ENCODE measurements at regions of chr22 and their contacts with region 1.

Region 1: DNA sequence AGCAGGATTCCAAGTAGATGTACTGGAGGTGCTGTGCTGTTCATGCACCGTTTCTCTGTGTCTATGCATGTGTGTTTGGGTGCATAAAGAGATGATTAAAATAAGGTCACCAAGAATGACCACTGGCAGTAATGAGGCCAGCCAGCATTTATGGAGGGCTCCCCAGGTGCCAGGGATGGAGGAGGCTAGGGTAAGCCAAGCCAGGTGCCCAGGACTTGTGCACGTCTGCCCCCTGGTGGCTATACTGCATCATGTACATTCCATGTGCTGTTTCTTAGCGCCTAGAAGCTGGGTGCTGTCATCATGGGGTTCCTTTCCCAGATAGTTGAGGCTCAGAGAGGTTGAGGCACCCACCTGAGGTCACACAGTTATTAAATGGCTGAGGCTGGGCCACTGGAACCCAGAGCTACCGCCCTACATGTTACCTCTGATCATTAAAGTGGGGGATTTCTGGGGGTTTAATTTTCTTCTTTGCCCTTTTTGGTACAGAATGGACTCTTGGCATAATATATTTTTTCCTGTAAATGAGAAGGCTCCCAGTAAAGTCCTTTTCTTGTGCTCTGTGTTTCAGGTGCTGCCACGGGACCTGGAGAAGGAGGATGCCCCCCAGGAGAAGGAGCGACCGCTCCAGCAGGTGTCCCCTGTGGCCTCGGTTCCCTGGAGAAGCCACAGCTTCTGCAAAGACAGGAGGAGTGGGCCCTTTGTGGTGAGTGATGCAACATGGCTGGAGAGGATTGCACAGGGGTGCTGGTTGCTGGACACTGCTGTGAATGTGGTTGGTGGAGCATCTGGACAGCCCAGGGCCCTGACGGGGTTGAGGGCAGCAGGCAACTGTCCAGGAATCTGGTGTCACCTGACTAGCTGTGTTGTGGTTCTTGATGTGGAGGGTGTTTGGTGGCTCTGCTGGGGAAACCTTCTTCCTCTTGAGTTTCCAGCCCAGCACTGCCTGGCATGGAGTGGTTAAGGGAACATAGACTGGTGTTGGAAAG is 96.4 kb downstream of the KIAA1671 start:
- DNase-seq: peak; percentile 73 to 82 (median 78)
- ATAC-seq: peak; percentile 77 to 81
- H3K4me3 ChIP-seq: no peak overlapping the region
- H3K27ac ChIP-seq: no peak overlapping the region
- H3K4me1 ChIP-seq: no peaks in the 10 kb centered on the region
- H3K27me3 ChIP-seq: no peaks in the 10 kb centered on the region

Region 2: GRCh38 chr22:24938741-24939341 is 110.1 kb before region 1 on chr22:
- intact Hi-C with region 1: loop called in 1 of 4 experiments (anchors 5 kb)
- DNase-seq: peak in 1 of 3 donors; percentile 48
- ATAC-seq: peak; percentile 51 to 58
- H3K4me3 ChIP-seq: no peak overlapping the region
- H3K27ac ChIP-seq: no peak overlapping the region
- H3K4me1 ChIP-seq: no peaks in the 10 kb centered on the region
- H3K27me3 ChIP-seq: no peaks in the 10 kb centered on the region

Region 3: DNA sequence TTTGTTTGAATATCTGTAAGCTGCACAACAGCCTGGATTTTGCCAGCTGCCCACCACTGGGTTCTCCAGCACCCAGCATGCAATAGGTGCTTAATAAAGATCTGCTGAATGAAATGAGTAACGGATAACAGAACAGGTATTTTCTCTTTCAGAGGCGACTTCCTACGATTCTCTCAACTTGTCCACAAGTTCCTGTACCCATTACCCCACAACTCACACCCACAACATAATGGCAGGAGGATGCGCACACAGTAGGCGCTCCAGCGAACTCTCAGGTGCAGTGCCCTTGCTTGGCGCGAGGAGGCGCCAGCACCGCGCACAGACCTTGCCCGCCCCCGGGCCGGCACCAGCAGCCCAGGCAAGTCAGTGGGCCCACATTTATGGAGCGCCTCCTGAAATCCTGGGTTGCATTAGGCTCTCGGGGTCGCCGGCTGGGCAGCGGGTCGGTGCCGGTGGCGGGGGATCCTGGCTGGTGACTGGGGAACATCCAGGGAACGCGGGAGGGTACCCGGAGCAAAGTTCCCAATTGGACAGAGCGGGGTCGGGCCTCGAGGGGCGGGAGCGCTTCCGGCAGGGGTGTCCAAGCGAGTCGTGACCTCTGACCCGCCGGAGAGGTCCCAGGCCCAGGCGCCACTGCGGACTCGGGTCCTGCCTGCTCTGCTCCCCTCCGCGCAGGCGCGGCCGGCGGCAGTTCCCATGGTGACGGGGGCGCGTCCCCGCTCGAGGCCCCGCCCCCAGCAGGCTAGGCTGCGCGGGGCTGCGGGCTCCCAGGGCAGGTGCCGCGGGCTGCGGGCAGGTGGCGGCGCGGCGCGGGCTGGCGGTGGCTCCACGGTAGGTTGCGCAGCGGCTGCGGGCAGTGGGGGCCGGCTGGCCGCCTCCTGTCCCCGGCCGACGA is 96.8 kb before region 1 on chr22 and contains the start of gene KIAA1671:
- intact Hi-C with region 1: loop called (anchors 1 to 2 kb)
- DNase-seq: peak; percentile 89 to 96 (median 95)
- ATAC-seq: peak; percentile 95 to 97
- H3K4me3 ChIP-seq: peak within 1 kb of the TSS; percentile 61
- H3K27ac ChIP-seq: peak within 1 kb of the TSS; percentile 52
- H3K4me1 ChIP-seq: no peaks in the 10 kb centered on the region
- H3K27me3 ChIP-seq: no peaks in the 10 kb centered on the region
- total RNA-seq, gene KIAA1671: 17.3 to 24.0 (median 20.3) TPM

Region 4: DNA sequence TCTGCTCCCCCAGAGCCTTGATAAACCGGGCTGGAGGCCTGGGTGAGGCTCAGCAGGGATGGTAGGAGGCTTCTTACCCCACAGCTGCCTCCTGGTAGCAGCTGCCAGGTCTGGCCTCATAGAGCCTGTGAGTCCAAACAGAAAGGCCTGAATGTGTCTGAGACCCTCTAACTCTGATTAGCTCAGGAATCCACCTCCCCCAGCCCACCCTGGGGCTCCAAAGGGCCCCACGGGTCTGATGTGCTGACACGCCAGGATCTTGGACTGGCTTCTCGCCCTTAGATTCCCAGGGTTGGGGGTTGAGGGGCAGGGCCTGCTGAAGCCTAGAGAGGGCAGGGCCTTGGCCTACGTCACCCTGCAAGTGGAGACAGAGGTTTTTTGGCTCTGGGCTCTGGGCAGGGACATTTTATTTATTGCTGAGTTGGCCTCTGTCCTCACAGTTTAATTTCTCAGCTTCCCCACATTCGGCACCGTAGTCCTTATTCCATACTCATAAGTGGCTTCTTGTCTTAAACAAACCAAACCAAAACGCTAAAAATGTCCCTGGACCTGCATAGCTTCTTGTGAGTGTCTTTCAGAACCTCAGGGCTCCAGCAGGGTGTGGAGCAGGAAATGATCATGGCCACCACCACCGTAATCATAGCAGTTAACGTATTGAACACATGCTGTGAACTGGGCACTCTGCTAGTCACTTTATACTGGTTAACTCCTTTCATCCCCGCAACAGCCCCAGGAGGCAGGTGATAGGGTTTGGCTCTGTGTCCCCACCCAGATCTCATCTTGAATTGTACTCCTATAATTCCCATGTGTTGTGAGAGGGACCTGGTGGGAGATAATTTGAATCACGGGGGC is 71.4 kb before region 1 on chr22:
- intact Hi-C with region 1: no loop called
- DNase-seq: peak; percentile 83 to 92 (median 88)
- ATAC-seq: peak; percentile 86 to 89
- H3K4me3 ChIP-seq: no peak overlapping the region
- H3K27ac ChIP-seq: peak overlapping the region; percentile 88
- H3K4me1 ChIP-seq: peaks cover 24% of the 10 kb centered on the region
- H3K27me3 ChIP-seq: no peaks in the 10 kb centered on the region

Region 5: DNA sequence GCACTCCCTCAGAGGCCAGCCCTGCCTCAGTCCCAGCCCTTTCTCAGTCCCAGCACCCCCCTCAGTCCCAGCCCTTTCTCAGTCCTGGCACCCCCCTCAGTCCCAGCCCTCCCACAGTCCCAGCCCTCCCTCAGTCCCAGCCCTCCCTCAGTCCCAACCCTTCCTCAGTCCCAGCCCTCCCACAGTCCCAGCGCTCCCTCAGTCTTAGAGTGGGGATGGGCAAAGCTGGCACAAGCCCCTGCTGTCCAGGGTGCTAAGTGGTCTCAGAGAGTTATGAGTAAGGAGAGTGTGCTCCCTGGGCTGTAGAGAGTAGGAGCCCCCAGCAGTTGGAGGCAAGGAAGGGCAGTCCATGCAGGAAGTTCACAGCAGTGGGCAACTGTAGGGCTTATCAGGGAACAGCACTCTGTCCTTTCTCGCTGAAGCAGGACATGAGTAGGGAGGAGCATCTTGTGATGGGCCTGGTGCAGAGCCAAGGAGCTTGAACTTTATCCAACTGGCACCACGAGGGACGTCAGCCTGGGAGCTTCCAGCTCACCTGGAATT is 99.3 kb after region 1 on chr22:
- intact Hi-C with region 1: no loop called
- DNase-seq: peak in 1 of 3 donors; percentile 34
- ATAC-seq: peak; percentile 78 to 80
- H3K4me3 ChIP-seq: no peak overlapping the region
- H3K27ac ChIP-seq: peak overlapping the region; percentile 61
- H3K4me1 ChIP-seq: peaks cover 6% of the 10 kb centered on the region
- H3K27me3 ChIP-seq: no peaks in the 10 kb centered on the region

Measured in right cardiac atrium (tissue), 5 donors.